H1 (cell line): ENCODE measurements at regions of chr11 and their contacts with region 1.

Region 1: GRCh38 chr11:636452-637235 is 425 bp upstream of the DRD4 start:
- DNase-seq: peak in 1 of 2 experiments; percentile 75
- H3K4me3 ChIP-seq: peak overlapping the region; percentile 34 to 60 (median 48)
- H3K27ac ChIP-seq: no peak overlapping the region
- H3K4me1 ChIP-seq: peaks cover 0 to 30% (median 20%) of the 10 kb centered on the region in 4 experiments; a peak in 6 of 7 replicates
- H3K27me3 ChIP-seq: peaks cover 21 to 49% (median 43%) of the 10 kb centered on the region in 4 experiments
- CTCF ChIP-seq: no peak
- EP300 ChIP-seq: no peak
- POLR2A ChIP-seq: no peak
- RAD21 ChIP-seq: no peak

Region 2: DNA sequence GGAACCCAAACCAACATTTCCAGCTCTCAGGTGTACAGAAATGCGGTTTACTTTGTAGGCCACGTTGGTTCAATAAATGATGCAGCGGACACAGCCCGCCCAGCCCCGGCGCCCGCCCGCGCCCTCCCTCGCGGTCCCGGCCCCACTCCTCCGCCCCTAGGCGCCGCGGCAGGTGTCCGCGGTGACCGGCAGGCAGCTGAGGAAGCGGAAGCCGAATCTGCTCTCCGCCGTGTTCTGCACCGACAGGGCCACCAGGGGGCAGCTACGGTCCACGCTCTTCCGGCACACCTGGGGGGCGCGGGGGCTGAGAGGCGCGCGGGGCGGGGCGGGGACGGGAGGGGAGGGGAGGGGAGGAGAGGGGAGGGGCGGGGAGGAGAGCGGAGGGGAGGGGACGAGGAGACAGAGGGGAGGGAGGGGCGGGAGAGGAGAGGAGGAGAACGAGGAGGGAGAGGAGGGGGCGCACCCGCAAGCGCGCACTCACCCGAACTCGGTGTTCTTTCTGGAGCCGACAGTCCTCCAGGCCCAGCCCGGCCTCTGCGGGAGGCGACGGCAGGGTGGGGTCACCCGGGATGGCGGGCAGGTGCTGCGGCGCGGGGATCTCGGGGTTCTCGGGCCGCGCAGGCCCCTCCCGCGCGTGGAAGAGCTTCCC is 81.7 kb before region 1 on chr11:
- CTCF ChIA-PET with region 1: interaction called, 10 read pairs
- POLR2A ChIA-PET with region 1: interaction called, 3 read pairs
- DNase-seq: peak; percentile 62 to 91
- H3K4me3 ChIP-seq: peak overlapping the region; percentile 42 to 83 (median 56)
- H3K27ac ChIP-seq: no peak overlapping the region
- H3K4me1 ChIP-seq: peaks cover 0 to 27% (median 7%) of the 10 kb centered on the region in 4 experiments; a peak in 5 of 7 replicates
- H3K27me3 ChIP-seq: peaks cover 13 to 29% (median 26%) of the 10 kb centered on the region in 4 experiments
- CTCF ChIP-seq: peak in 2 of 3 experiments; percentile 68 to 82; a peak in 3 of 4 replicates
- EP300 ChIP-seq: no peak
- POLR2A ChIP-seq: no peak
- RAD21 ChIP-seq: peak; percentile 77 to 79

Region 3: GRCh38 chr11:568306-569157 is 68.1 kb before region 1 on chr11:
- CTCF ChIA-PET with region 1: interaction called, 3 read pairs
- POLR2A ChIA-PET with region 1: interaction called, 10 read pairs
- DNase-seq: peak; percentile 67 to 95
- H3K4me3 ChIP-seq: peak overlapping the region; percentile 43 to 67 (median 52)
- H3K27ac ChIP-seq: no peak overlapping the region
- H3K4me1 ChIP-seq: peaks cover 2 to 22% (median 11%) of the 10 kb centered on the region in 4 experiments; a peak in 6 of 7 replicates
- H3K27me3 ChIP-seq: peaks cover 0 to 3% (median 1%) of the 10 kb centered on the region in 4 experiments; a peak in 3 of 7 replicates
- CTCF ChIP-seq: no peak
- EP300 ChIP-seq: peak in 1 of 2 experiments; percentile 93; a peak in 1 of 3 replicates
- POLR2A ChIP-seq: no peak
- RAD21 ChIP-seq: no peak

Region 4: GRCh38 chr11:613369-614268 is 23.0 kb before region 1 on chr11:
- CTCF ChIA-PET with region 1: interaction called, 4 read pairs
- POLR2A ChIA-PET with region 1: interaction called, 20 read pairs
- DNase-seq: peak; percentile 64 to 86
- H3K4me3 ChIP-seq: peak overlapping the region in 1 of 4 experiments; percentile 32; a peak in 1 of 8 replicates
- H3K27ac ChIP-seq: no peak overlapping the region
- H3K4me1 ChIP-seq: peaks cover 0 to 15% (median 3%) of the 10 kb centered on the region in 4 experiments; a peak in 5 of 7 replicates
- H3K27me3 ChIP-seq: no peaks in the 10 kb centered on the region
- CTCF ChIP-seq: no peak
- EP300 ChIP-seq: no peak
- POLR2A ChIP-seq: no peak; a peak in 1 of 3 replicates
- RAD21 ChIP-seq: no peak

Region 5: DNA sequence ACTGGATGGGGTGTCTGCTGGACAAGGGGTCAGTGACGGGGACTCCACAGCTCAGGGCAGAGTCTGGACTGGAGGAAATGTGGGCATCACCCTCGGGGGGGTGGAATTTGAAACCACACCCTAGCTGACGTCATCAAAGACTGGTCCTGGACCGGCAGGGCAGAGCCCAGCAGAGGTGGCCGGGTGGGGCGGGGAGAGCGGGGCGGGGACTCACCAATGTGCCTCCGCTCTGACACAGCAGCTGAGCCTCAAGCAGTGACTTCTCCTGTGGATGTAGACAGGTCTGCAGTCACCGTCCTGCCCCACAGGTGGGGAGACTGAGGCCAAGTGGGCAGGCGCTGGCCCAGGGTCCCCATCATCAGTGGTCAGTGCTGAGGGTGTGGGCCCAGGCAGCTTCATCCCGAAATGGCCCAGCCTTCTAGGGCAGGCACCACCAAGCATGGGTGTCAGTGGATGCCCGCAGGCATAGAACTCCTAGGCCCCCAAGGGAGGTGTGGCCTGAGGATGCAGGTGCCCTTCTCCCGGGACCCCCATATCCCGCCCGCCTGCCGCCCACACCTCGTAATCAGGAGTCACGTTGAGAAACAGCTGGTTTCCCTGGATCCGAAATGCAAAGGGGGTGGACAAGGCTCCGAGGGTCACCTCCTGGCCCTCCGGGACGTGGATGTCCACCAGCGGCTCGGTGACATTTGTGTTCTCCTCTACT is 12.5 kb before region 1 on chr11:
- CTCF ChIA-PET with region 1: no interaction called
- POLR2A ChIA-PET with region 1: interaction called, 10 read pairs
- DNase-seq: no peak
- H3K4me3 ChIP-seq: no peak overlapping the region
- H3K27ac ChIP-seq: no peak overlapping the region
- H3K4me1 ChIP-seq: peaks cover 0 to 6% (median under 1%) of the 10 kb centered on the region in 4 experiments; a peak in 2 of 7 replicates
- H3K27me3 ChIP-seq: peaks cover 3 to 14% (median 10%) of the 10 kb centered on the region in 4 experiments; a peak in 6 of 7 replicates
- CTCF ChIP-seq: no peak
- EP300 ChIP-seq: no peak
- POLR2A ChIP-seq: no peak
- RAD21 ChIP-seq: no peak